MCF 10A (cell line): ENCODE measurements at regions of chr2 and their contacts with region 1.

Region 1: GRCh38 chr2:108637304-108637669 is 82.0 kb upstream of the RANBP2 start:
- DNase-seq: peak; percentile 46
- H3K4me3 Mint-ChIP-seq: no peak overlapping the region
- H3K27ac Mint-ChIP-seq: peak overlapping the region; percentile 35
- H3K4me1 Mint-ChIP-seq: peaks cover 38% of the 10 kb centered on the region
- H3K27me3 Mint-ChIP-seq: no peaks in the 10 kb centered on the region
- CTCF ChIP-seq: no peak

Region 2: DNA sequence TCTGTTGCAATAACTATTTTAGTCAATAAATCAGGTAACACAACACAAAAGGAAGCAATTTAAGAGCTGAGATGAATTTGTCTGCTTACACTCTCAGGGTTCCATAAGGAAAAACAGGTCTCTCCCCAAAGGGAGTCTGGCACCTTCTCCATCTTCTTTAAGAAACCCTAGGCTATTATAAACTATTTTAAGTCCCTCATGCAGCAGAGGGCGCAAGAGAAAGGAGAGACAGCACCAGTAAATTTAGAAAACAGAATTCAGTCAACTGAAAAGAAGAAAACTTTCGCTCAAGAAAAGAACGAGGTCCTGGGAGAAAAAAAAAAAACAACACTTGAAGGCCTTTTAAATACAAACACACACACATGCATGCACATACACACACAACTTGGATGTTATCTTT is 240.4 kb before region 1 on chr2:
- CTCF ChIA-PET with region 1: interaction called, 16 read pairs
- POLR2A ChIA-PET with region 1: no interaction called
- intact Hi-C with region 1: no loop called
- DNase-seq: peak; percentile 76
- H3K4me3 Mint-ChIP-seq: no peak overlapping the region
- H3K27ac Mint-ChIP-seq: no peak overlapping the region
- H3K4me1 Mint-ChIP-seq: peaks cover 7% of the 10 kb centered on the region
- H3K27me3 Mint-ChIP-seq: no peaks in the 10 kb centered on the region
- CTCF ChIP-seq: peak; percentile 32

Region 3: GRCh38 chr2:108542071-108542470 is 95.2 kb before region 1 on chr2:
- CTCF ChIA-PET with region 1: interaction called, 10 read pairs
- POLR2A ChIA-PET with region 1: no interaction called
- intact Hi-C with region 1: no loop called
- DNase-seq: no peak
- H3K4me3 Mint-ChIP-seq: no peak overlapping the region
- H3K27ac Mint-ChIP-seq: peak overlapping the region; percentile 17
- H3K4me1 Mint-ChIP-seq: peaks cover 26% of the 10 kb centered on the region
- H3K27me3 Mint-ChIP-seq: no peaks in the 10 kb centered on the region
- CTCF ChIP-seq: no peak

Region 4: DNA sequence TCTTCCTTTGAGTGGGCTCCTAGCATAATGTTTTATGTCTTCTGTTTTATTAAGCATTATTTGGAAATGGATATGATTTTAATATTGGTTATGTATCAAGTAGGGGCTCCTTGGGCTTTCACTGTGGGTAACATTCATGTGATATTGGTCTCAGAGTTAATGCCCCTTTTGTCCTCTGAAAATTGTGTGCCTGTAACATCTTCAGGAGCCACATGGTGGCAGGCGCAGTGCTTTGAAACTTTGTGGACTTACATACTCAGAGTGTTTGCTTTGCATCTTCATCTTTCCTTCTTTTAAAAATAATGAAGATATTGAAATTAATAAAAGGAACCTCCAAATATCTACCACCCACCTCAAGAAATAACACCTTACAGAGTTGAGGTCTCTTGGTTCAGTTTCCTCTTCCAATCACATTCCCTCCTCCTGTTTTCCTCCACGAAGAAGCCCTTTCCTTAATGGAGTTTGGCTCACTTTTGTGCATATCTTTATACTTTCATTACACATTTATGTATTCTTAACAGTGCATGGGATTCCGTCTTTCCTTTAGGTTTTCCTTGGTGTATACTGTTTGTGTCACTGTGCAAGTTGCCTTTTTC is 29.5 kb before region 1 on chr2:
- CTCF ChIA-PET with region 1: interaction called, 207 read pairs
- POLR2A ChIA-PET with region 1: interaction called, 20 read pairs
- intact Hi-C with region 1: loop called (anchors 1 kb)
- DNase-seq: peak; percentile 48
- H3K4me3 Mint-ChIP-seq: no peak overlapping the region
- H3K27ac Mint-ChIP-seq: peak overlapping the region; percentile 36
- H3K4me1 Mint-ChIP-seq: peaks cover 20% of the 10 kb centered on the region
- H3K27me3 Mint-ChIP-seq: no peaks in the 10 kb centered on the region
- CTCF ChIP-seq: peak; percentile 48

Region 5: DNA sequence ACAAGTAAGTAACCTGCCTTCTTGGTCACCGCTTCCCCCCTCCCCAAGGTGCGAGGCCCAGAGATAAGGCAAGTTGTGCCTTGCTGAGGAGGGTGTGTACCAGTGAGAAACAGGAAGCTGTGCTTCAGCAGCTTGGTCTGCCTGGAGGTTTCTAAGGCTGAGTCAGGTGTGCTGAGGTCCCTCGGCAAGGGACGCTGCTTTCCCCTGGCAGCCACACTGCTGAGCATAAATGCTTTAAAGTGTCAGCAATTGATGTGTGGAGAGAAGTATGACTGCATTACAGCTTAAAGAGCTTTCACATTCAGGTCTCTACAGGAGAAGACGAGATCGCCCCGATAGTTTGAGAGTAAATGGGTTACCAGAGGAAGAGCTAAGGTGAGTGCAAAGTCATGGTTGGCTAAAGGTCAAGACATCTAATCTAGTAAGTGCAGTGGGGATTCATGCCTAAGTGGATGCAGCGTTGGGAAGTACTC is 16.2 kb before region 1 on chr2:
- CTCF ChIA-PET with region 1: interaction called, 207 read pairs
- POLR2A ChIA-PET with region 1: interaction called, 26 read pairs
- intact Hi-C with region 1: no loop called
- DNase-seq: peak; percentile 71
- H3K4me3 Mint-ChIP-seq: peak overlapping the region; percentile 67
- H3K27ac Mint-ChIP-seq: peak overlapping the region; percentile 78
- H3K4me1 Mint-ChIP-seq: peaks cover 40% of the 10 kb centered on the region
- H3K27me3 Mint-ChIP-seq: no peaks in the 10 kb centered on the region
- CTCF ChIP-seq: no peak

Region 6: DNA sequence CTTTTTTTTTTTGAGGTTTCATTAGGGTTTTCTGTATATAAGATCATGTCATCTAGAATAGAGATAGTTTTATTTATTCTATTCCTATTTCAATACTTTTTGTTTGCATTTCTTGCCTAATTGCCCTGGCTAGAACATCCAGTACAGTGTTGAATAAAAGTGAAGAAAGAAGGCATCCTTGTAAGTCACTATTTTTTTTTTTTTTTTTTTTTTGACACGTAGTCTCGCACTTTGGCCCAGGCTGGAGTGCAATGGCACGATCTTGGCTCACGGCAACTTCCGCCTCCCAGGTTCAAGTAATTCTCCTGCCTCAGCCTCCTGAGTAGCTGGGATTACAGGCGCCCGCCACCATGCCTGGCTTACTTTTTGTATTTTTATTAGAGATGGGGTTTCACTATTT is 54.2 kb after region 1 on chr2:
- CTCF ChIA-PET with region 1: no interaction called
- POLR2A ChIA-PET with region 1: no interaction called
- intact Hi-C with region 1: no loop called
- DNase-seq: no peak
- H3K4me3 Mint-ChIP-seq: no peak overlapping the region
- H3K27ac Mint-ChIP-seq: no peak overlapping the region
- H3K4me1 Mint-ChIP-seq: no peaks in the 10 kb centered on the region
- H3K27me3 Mint-ChIP-seq: no peaks in the 10 kb centered on the region
- CTCF ChIP-seq: no peak

Region 7: DNA sequence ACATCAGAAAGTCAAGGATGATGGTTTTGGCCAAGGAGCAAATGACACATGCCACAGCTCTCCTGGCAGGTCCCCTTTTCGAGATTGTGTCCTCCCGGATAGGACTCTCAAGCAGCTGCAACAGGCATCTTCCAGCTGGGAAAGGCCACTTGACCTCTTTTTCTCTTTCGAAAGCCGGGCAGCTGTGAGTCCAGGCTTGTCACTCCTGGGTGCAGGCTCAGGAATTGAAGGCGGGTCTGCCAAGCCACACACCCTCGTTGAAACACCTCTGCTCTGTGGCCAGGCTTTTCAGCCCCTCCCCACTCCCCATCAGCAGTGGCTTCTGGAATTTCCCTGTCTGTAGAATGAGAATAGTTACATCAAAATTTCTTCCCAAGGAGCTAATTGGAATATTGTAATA is 247.3 kb after region 1 on chr2:
- CTCF ChIA-PET with region 1: no interaction called
- POLR2A ChIA-PET with region 1: no interaction called
- intact Hi-C with region 1: no loop called
- DNase-seq: peak; percentile 3
- H3K4me3 Mint-ChIP-seq: no peak overlapping the region
- H3K27ac Mint-ChIP-seq: no peak overlapping the region
- H3K4me1 Mint-ChIP-seq: no peaks in the 10 kb centered on the region
- H3K27me3 Mint-ChIP-seq: no peaks in the 10 kb centered on the region
- CTCF ChIP-seq: no peak